Activated CD4-positive, alpha-beta T cell treated with anti-CD3 and anti-CD28 coated beads for 36 hours (primary cell): ENCODE measurements at regions of chr13 and their contacts with region 1.

Region 1: DNA sequence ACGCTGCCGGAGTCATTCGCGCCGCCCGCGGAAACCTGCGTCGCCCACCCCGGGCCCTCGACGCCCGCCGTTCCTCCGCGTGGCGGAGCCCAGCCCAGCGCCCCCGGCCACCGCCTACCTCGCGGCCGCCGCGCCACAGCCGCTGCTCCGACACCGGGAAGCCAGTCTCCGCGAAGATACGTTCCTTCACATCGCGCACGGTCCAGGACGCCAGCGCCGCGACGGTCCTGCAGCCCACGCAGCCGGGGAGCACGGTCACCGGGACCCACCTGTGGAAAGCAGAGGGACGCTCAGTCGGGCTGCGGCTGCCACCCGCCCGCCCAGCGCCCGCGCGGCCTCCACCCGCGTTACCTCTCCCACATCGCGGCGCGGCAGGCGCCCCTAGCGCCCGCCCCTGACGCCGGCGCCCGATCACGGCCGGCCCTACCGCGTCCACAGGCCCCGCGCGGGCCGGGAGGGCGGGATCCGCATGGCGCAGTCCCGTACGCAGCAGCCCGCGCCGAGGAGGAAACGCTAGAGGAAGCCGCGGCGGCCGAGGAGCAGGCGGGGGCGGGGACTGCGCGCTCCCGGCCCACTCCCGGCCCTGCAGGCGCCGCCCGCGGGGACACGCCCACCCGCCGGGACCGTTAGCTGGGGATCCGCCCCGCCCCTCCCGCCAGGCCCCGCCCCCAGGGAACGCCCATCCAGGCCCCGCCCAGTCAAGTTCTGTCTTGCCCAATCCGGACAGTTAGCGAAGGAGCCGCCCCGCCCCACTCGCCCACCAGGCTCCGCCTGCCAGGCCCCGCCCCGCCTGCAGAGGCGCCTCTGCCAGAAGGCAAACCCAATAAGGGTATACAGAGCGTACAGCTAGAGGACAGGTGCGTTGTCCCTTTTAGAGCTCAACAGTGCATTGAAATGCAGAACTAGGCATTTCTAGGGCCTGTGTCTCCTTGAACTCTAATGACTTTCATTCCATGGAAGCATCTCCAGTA is 58.2 kb downstream of the SACS start:
- DNase-seq: peak; percentile 99
- ATAC-seq: peak; percentile 89
- H3K4me3 Mint-ChIP-seq: peak overlapping the region; percentile 74
- H3K27ac Mint-ChIP-seq: peak overlapping the region; percentile 60
- H3K4me1 Mint-ChIP-seq: peaks cover 67% of the 10 kb centered on the region
- H3K27me3 Mint-ChIP-seq: no peaks in the 10 kb centered on the region

Region 2: DNA sequence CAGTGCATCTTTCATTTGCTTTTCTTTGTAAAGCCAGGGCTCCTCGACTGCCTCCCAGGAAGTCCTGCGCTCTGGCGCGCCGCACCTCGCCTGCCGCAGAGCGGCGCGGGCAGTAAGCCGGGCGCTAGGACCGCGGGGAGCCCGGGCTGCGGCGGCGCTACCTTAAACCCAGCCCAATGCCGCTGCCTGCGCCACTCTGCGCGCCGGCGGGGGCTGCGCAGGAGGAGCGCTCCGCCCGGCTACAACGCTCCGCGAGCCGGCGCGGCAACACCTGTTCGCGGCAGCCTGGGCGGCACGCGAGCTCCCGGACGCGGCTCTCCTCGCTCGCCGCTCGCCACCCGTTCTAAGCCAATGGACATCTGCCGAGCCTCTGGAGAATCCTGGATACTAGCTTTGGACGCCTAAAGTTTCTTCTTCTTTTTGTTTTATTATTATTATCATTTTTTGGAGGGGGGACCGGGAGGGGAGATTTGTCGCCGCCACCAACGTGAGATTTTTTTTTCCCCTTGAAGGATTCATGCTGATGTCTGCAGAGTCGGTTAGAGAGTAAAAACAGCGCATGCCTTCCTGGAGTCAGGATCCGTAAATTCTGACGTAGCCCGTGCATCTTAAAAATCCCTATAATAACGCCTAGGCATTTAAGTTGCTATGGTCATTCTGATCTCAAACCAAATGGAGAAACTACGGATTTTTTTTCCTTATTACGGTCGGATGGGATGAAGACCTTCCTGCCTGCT is 1704.2 kb before region 1 on chr13 and contains the start of gene FGF9:
- CTCF ChIA-PET with region 1: no interaction called
- POLR2A ChIA-PET with region 1: no interaction called
- intact Hi-C with region 1: loop called in 1 of 2 experiments (anchors 5 kb)
- DNase-seq: peak; percentile 88
- ATAC-seq: peak; percentile 78
- H3K4me3 Mint-ChIP-seq: peak within 1 kb of the TSS; percentile 76
- H3K27ac Mint-ChIP-seq: peak within 1 kb of the TSS; percentile 53
- H3K4me1 Mint-ChIP-seq: peaks cover 45% of the 10 kb centered on the region
- H3K27me3 Mint-ChIP-seq: peaks cover 43% of the 10 kb centered on the region
- total RNA-seq, gene FGF9: 0.19 TPM in 1 of 2 experiments, not detected in the other

Region 3: DNA sequence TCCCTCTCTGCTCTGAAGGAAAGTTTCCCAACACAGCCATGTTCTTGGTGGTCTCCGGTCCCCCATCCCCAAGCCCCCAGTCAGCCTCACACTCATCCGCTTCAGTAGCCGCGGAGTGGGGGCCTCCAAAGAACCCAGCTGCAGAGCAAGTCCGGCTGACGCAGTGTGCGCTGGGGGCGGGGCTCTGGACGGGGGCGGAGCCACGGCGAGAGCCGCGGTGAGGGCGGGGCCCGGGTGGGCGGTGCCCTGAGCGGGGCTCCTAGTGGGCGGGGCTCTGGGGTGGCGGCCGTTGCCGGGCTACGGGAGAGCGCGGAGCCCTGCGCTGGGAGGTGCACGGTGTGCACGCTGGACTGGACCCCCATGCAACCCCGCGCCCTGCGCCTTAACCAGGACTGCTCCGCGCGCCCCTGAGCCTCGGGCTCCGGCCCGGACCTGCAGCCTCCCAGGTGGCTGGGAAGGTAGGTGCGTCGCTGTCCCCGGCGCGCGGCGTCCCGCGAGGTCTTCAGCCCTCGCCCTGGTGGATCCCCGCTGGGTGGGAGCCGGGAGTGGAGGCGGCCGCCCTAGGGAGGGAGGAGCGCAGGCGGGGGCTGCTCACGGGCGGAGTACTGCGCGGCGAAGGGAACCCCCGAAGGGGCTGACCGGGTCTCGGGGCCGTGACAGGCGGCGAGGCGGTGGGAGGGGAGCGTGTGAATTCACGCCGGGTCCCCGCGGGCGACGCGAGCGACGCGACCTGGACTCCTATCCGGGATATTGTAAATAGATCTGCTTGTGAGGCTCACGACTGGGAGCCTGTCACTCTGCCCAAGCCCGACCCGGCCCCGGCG is 204.0 kb after region 1 on chr13:
- CTCF ChIA-PET with region 1: no interaction called
- POLR2A ChIA-PET with region 1: no interaction called
- intact Hi-C with region 1: loop called (anchors 1 to 5 kb)
- DNase-seq: peak; percentile 96
- ATAC-seq: peak; percentile 95
- H3K4me3 Mint-ChIP-seq: peak overlapping the region; percentile 71
- H3K27ac Mint-ChIP-seq: no peak overlapping the region
- H3K4me1 Mint-ChIP-seq: peaks cover 24% of the 10 kb centered on the region
- H3K27me3 Mint-ChIP-seq: peaks cover 33% of the 10 kb centered on the region

Region 4: GRCh38 chr13:23888658-23889614 is 513.6 kb after region 1 on chr13 and contains the start of gene MIPEP:
- CTCF ChIA-PET with region 1: no interaction called
- POLR2A ChIA-PET with region 1: no interaction called
- intact Hi-C with region 1: loop called (anchors 1 to 5 kb)
- DNase-seq: peak; percentile 94
- ATAC-seq: peak; percentile 90
- H3K4me3 Mint-ChIP-seq: peak within 1 kb of the TSS; percentile 79
- H3K27ac Mint-ChIP-seq: peak within 1 kb of the TSS; percentile 75
- H3K4me1 Mint-ChIP-seq: peaks cover 23% of the 10 kb centered on the region
- H3K27me3 Mint-ChIP-seq: no peaks in the 10 kb centered on the region
- total RNA-seq, gene MIPEP: 13.2 to 15.5 TPM

Region 5: DNA sequence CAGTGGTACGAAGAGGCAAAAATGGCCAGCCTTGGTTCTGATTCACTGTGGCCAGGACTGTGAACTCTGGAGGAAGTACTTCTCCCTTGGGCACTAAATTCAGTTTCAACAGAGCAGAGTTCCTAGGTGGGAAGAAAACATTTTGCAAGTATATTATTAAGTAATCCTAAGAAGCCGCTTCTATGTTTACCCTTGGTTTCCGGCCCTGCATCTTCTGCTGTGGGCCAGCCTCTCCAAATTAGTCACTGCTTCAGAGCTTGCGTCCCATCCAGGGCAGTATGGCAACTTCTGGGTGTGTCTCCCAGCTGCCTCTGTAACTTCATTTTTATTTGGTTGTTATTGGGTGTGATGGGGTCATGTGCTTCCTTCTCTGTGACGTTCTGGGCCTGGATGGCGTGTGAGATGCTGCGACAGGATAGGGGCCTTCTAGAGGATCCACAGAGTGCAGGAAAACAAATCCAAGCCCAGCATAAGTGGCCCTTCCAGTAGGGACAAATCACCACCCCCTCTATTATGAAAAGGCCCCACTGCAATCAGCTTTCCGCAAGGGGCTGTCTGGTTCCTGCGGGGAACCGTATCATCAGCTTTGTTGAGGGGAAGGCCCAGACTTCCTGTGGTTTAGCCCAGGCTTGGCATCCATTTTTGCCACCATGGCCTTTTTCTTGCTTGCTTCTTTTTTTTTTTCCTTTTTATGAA is 879.0 kb after region 1 on chr13:
- CTCF ChIA-PET with region 1: no interaction called
- POLR2A ChIA-PET with region 1: no interaction called
- intact Hi-C with region 1: loop called in 1 of 2 experiments (anchors 5 kb)
- DNase-seq: peak; percentile 76
- ATAC-seq: peak; percentile 61
- H3K4me3 Mint-ChIP-seq: peak overlapping the region; percentile 95
- H3K27ac Mint-ChIP-seq: peak overlapping the region; percentile 96
- H3K4me1 Mint-ChIP-seq: peaks cover 88% of the 10 kb centered on the region
- H3K27me3 Mint-ChIP-seq: no peaks in the 10 kb centered on the region

Region 6: DNA sequence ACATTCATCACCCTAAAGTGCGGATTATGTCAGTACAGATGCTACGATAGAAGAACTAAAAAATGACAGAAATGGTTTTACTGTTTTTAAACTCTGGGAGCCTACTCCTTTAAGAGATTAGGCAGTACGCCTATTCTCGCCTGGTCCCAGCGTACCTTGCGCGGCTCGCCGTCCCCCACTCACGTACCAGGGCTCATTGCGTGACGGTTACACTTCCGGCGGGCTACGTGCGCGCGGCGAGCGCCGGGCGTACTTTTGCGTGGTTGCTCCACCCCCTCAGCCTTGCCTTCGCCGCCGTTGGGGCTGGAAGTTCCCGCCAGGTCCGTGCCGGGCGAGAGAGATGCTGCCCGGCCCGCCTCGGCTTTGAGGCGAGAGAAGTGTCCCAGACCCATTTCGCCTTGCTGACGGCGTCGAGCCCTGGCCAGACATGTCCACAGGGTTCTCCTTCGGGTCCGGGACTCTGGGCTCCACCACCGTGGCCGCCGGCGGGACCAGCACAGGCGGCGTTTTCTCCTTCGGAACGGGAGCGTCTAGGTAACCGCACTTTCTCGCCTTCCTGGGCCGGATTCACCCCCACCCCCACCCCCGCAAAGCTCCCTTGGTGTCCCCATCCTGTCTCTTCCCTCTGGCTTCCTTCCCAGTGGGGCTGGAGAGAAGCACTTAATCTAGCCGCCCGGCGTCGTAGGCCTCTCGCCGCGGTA is 1926.2 kb after region 1 on chr13 and contains the start of gene NUP58:
- CTCF ChIA-PET with region 1: no interaction called
- POLR2A ChIA-PET with region 1: no interaction called
- intact Hi-C with region 1: loop called in 1 of 2 experiments (anchors 5 kb)
- DNase-seq: peak; percentile 97
- ATAC-seq: peak; percentile 98
- H3K4me3 Mint-ChIP-seq: peak within 1 kb of the TSS; percentile 94
- H3K27ac Mint-ChIP-seq: peak within 1 kb of the TSS; percentile 95
- H3K4me1 Mint-ChIP-seq: peaks cover 30% of the 10 kb centered on the region
- H3K27me3 Mint-ChIP-seq: peaks cover 4% of the 10 kb centered on the region
- total RNA-seq, gene NUP58: 134 to 137 TPM